Kidney (tissue), 22 donors: ENCODE measurements at regions of chr7 and their contacts with region 1.

Region 1: DNA sequence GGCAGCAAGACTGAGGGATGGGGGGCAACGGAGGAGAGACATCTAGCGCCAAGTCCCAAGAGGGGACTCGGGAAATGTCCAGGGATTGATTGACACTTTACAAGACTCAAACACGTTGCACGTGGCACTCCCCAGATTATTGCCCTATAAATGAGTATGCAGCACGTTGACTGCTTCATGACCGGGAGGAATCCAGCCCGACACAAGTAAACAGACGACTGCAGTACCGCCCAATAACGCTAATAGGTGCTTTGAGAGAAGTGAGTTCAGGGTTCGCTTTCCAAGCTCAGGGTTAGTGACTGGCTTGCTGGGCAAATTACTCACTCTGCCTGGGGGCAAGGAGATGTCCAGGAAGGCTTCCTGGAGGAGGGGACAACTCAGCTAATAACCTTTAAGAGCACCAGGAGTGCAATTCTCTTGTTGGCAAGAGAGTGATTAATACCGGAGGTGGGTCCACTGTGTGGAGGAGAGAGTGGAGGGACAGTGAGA is 73.3 kb upstream of the MYL10 start:
- DNase-seq: peak in 2 of 5 donors; percentile 22 to 53
- H3K4me3 ChIP-seq: no peak overlapping the region
- H3K27ac ChIP-seq: no peak overlapping the region
- H3K4me1 ChIP-seq: no peaks in the 10 kb centered on the region
- H3K27me3 ChIP-seq: no peaks in the 10 kb centered on the region
- CTCF ChIP-seq: no peak

Region 2: DNA sequence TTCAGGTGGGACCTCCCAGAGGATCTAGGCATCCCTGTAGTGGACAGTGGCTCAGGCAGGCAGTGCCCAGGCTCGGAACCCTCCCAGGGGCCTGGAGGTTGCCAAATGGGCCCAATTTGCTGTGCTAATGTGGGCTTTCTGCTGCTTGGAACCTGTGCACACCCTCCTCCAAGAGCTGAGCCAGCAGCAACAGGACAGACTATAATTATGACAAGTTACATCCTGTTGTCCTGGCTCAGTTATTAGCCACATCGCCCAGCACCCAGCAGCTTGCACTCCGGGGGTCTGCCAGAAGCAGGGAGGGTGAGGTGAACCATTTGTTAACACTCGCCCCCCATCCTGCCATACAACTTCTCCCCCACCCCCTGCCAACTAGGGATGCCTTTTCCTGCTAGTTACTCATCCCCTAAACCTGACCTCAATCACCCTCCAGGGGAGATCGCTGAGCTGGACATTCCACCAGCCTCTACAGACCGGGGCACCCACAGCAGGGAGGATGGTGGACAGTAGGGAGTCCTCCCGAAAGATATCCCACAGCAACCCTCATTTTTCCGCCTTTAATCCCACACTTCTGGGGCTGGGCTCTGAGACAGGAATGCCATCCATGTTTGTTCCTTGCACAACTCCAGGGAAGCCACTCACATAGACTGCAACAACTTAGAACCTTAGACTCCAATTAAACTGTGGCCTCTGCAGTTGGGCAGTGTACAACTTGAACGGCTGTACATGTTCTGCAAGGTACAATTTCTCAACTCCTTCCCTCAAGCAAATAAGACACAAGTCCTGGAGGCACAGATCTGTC is 65.4 kb before region 1 on chr7:
- intact Hi-C with region 1: no loop called
- DNase-seq: no peak
- H3K4me3 ChIP-seq: no peak overlapping the region
- H3K27ac ChIP-seq: no peak overlapping the region
- H3K4me1 ChIP-seq: no peaks in the 10 kb centered on the region
- H3K27me3 ChIP-seq: no peaks in the 10 kb centered on the region
- CTCF ChIP-seq: no peak

Region 3: GRCh38 chr7:101772513-101773211 is 70.3 kb after region 1 on chr7:
- intact Hi-C with region 1: no loop called
- DNase-seq: no peak
- H3K4me3 ChIP-seq: no peak overlapping the region
- H3K27ac ChIP-seq: no peak overlapping the region
- H3K4me1 ChIP-seq: no peaks in the 10 kb centered on the region
- H3K27me3 ChIP-seq: no peaks in the 10 kb centered on the region
- CTCF ChIP-seq: no peak

Region 4: DNA sequence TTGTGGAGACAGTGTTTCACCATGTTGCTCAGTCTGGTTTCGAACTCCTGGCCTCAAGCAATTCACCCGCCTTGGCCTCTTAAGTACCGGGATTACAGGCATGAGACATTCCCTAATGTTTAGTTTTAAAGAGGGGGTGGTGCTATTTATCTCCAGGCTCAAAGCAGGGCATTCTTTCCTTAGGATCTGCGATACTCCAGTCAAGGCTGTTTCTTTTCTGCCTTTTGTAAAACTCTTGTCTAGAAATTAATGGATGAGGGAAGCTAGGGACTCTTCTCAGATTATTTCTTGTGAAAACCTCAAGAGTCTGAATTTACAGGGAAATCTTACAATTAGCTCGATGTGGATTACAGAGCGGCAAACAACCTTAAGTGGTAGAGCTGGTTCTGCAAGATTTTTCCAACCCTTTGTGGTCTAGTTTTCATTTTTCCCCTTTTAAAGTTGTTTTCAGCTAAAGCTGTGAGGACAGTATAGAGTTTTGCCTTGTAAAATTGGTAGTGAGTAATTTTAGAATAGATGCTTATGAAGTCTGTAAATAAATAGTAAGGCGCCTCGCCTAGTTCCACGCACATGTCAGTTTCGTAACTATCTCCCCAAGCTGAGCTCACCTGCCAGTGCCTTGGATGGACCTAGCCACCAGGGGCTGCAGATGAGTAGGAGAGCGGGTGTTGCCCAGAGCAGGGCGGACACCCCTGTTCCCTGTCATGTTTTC is 168.1 kb after region 1 on chr7:
- intact Hi-C with region 1: no loop called
- DNase-seq: peak in 1 of 5 donors; percentile 76
- H3K4me3 ChIP-seq: no peak overlapping the region
- H3K27ac ChIP-seq: peak overlapping the region in 1 of 2 donors; percentile 32
- H3K4me1 ChIP-seq: peaks cover 0 to 29% (median 27%) of the 10 kb centered on the region in 3 donors
- H3K27me3 ChIP-seq: no peaks in the 10 kb centered on the region
- CTCF ChIP-seq: no peak

Region 5: DNA sequence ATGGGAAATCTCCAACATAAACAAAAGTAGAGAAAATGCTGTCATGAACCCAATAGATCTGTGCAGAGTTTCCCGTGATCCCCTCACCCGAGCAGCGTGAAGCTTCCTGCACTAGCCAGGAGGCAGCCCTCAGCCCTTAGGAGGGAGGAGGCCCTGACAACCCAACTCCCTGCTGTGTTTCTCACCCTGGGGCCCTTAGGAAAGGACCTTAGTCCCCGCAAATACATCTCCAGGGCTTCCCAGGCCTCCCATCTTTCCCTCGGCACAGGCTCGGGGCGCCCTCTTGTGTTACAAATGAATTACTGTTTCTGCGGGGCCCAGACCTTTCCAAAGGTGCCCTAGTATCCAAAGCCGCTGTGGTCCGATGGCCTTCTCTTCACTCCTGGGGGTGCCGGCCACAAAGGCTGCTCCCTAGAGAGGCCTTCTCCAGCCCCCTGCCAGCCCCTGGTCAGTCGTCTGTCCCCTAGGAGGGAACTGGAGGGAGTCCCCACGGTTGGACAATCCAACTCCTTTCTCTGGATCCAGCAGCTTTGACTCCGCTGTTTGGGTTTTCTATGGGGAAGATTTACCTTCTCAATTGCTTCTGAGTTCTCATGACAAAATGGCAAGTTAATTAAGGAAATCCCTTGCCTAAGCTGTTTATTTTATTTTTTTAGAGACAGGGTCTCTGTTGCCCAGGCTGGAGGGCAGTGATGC is 534.3 kb after region 1 on chr7:
- intact Hi-C with region 1: loop called (anchors 10 kb)
- DNase-seq: peak; percentile 65 to 83 (median 71)
- H3K4me3 ChIP-seq: no peak overlapping the region
- H3K27ac ChIP-seq: peak overlapping the region in 1 of 2 donors; percentile 4
- H3K4me1 ChIP-seq: peaks cover 0 to 4% (median 0%) of the 10 kb centered on the region in 3 donors
- H3K27me3 ChIP-seq: no peaks in the 10 kb centered on the region
- CTCF ChIP-seq: peak; percentile 71